GM13976 (cell line): ENCODE measurements at regions of chr2 and their contacts with region 1.

Region 1: GRCh38 chr2:237072067-237072931 is 13.4 kb upstream of the COPS8 start:
- DNase-seq: peak; percentile 61
- CTCF ChIP-seq: peak; percentile 92

Region 2: DNA sequence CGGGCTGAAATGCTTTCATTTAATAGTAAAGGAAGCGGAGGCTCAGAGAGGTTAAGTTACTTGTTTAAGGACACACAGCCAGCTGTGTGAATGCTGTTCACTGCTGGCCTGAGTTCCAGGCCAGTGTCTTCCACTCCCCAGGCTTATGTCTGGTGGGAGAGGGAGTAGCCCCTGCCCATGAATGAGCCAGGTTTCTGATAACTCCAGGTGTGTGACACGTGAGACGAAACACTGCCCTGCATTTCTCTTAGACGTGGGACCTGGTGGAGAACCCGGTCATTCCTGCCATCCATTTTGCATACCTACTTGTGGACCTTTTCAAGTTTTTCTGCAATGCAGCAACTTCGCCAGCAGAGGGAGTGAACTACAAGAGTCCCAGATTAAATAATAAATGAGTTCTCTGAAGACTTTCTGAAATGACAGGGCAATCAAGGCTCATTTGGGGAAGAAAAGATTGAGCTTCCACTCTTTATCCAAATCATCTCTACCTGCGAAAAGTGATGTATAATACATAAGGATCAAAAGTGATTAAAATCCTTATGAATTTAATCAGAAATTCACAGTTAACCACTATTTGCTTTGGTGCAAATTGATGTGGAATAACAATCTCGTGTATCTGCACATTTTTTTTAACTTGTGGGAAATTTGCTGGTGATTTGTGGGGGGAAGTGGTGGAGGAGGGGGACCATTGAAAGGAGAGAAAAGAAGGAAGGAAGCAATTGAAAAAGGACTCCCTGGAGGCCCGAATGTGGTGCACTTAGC is 728.7 kb before region 1 on chr2:
- in situ Hi-C with region 1: loop called (anchors 10 kb)
- DNase-seq: peak; percentile 80
- CTCF ChIP-seq: peak; percentile 21

Region 3: DNA sequence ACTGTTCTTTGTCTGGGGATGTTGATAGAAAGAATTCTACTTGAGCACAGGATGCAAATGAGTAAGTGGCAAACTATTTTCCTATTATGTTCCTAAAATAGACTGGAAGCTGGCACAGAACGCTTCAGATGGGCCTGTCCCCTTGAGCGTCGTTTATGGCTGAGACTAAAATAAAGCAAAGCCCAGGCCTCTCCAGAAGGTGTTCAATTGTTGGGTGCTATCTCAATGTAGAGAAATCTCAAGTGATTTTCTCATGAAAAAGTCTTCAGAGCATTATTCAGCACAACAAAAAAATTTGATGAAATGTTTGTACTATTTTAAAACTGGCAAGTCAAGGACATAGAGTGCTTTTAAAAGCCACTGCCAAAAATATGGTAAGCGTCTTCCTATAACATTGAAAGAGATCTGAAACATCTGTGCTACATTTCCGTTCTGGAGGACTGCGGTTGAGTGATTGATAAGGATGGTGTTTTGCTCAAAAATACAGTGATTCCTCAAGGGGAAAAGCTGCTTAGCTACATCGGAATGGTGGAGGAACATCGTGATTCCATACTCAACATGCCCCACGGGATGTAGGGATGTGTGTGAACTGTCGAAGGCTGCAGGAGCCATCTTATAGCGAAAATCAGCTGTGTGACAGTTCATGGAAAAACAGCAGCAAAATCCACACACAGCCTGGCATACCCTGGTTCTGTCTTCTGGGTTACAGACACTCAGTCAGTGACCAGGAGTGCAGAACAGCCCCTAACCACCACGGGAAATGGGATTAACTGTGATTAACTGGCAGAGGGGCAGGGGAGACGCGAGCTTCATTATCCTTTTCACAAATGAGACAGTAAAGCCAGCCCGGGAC is 544.7 kb after region 1 on chr2:
- in situ Hi-C with region 1: no loop called
- DNase-seq: no peak
- CTCF ChIP-seq: no peak

Region 4: DNA sequence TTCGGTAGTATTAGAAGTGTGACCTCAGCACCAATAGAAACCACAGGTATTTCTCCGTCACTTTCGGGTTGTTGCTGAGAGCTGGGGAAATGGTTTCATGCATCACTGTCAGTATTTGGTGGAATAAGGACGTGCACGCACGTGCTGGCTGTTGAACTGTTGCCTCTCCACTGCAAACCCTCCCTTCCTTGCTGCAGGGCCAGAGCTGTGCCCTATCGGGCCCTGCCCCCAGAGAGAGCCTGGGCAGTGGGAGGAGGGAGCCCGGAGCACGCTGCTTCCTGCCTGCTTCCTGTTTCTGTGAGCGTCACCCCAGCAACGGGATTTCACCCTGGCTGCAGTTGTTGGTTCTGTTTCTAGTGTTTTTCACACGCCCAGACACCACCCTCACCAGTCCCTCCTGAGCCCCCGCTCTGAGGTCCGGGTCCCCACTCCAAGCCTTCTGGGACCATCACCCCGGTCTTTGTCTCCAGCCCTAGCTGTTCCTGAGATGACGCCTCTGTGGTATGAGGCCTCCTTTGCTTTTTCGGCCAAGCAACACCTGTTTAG is 602.5 kb after region 1 on chr2:
- in situ Hi-C with region 1: no loop called
- DNase-seq: peak; percentile 83
- CTCF ChIP-seq: no peak